CD4-positive, alpha-beta T cell (primary cell): ENCODE measurements at regions of chr7 and their contacts with region 1.

Region 1: GRCh38 chr7:154927624-154928143 is 75.2 kb downstream of the PAXIP1 start:
- DNase-seq: peak; percentile 59 to 91 (median 74)
- ATAC-seq: peak; percentile 59
- H3K4me3 ChIP-seq: peak overlapping the region; percentile 80
- H3K4me3 Mint-ChIP-seq: peak overlapping the region; percentile 93
- H3K27ac ChIP-seq: peak overlapping the region; percentile 69 to 82
- H3K27ac Mint-ChIP-seq: peak overlapping the region; percentile 96
- H3K4me1 ChIP-seq: peaks cover 25% of the 10 kb centered on the region
- H3K4me1 Mint-ChIP-seq: peaks cover 40% of the 10 kb centered on the region
- H3K27me3 ChIP-seq: no peaks in the 10 kb centered on the region
- H3K27me3 Mint-ChIP-seq: no peaks in the 10 kb centered on the region
- CTCF ChIP-seq: peak; percentile 72

Region 2: GRCh38 chr7:154913638-154914312 is 13.9 kb before region 1 on chr7:
- CTCF ChIA-PET with region 1: interaction called, 26 read pairs
- POLR2A ChIA-PET with region 1: interaction called, 15 read pairs
- intact Hi-C with region 1: no loop called
- DNase-seq: peak; percentile 81 to 93 (median 86)
- ATAC-seq: peak; percentile 98
- H3K4me3 ChIP-seq: peak overlapping the region; percentile 49
- H3K4me3 Mint-ChIP-seq: peak overlapping the region; percentile 84
- H3K27ac ChIP-seq: no peak overlapping the region
- H3K27ac Mint-ChIP-seq: no peak overlapping the region
- H3K4me1 ChIP-seq: peaks cover 10% of the 10 kb centered on the region
- H3K4me1 Mint-ChIP-seq: peaks cover 5% of the 10 kb centered on the region
- H3K27me3 ChIP-seq: peaks cover 0 to 10% of the 10 kb centered on the region in 2 experiments
- H3K27me3 Mint-ChIP-seq: peaks cover 26% of the 10 kb centered on the region
- CTCF ChIP-seq: peak; percentile 94

Region 3: DNA sequence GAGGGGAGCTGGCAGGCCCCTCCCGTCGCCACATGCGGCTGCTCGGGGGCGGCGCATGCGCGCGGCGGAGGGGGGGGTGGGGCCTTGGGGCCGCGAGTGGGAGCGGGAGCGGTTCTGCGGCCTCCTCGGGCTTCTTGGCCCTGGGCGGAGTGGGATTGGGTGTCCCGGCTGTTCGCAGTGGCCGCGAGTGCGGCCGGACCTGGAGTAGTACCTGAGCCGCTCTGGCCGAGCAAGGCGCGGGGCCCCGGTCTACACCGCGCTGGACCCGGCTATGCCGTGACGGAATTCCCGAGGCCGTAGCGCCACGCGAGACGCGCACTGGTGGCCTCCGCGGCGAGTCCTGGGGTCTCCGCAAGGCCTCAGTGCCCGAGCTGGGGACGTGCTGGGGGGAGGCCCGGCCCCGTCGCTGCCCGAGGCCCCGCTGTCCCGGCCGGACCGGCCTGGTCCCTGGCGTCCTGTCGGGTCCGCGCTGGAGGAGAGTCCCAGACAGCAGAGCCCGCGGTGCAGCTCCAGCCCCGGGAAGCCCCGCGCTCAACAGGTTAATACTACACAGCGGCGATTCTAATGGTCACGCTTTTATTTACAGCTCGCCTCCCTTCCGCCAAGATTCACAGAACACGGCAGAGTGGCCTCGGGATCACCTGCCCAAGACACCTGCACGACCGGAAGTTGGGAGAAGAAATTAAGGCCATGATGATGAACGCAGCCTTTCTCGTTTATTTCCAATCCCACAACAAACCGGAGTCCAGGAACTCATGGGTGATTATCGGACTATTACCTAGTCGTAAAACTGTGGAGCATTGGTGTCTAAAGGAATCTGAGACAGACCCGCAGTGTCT is 75.9 kb after region 1 on chr7:
- CTCF ChIA-PET with region 1: interaction called, 8 read pairs
- POLR2A ChIA-PET with region 1: interaction called, 29 read pairs
- intact Hi-C with region 1: loop called (anchors 1 kb)
- DNase-seq: peak; percentile 71 to 92 (median 85)
- ATAC-seq: peak; percentile 86
- H3K4me3 ChIP-seq: peak overlapping the region; percentile 85
- H3K4me3 Mint-ChIP-seq: peak overlapping the region; percentile 97
- H3K27ac ChIP-seq: peak overlapping the region; percentile 40 to 52
- H3K27ac Mint-ChIP-seq: peak overlapping the region; percentile 88
- H3K4me1 ChIP-seq: peaks cover 16% of the 10 kb centered on the region
- H3K4me1 Mint-ChIP-seq: peaks cover 23% of the 10 kb centered on the region
- H3K27me3 ChIP-seq: no peaks in the 10 kb centered on the region
- H3K27me3 Mint-ChIP-seq: no peaks in the 10 kb centered on the region
- CTCF ChIP-seq: no peak

Region 4: DNA sequence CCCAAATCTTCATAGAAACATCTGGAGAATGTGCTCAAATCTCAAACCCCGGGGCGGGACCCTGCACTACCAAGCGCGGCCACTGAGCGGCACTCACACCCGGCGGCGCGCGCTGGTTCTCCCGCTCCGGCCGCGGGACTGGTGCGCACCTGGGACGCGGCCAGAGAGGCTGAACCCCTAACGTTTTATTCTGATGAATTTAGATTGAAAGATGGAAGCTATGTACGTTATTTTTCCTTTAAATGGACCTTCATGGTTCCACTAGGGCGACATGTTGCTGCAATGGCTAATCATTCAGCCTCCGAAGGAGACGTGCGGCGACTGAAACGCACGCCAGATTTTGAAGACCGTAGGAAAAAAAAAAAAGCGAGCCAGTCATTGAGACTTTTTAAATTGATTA is 263.0 kb after region 1 on chr7:
- CTCF ChIA-PET with region 1: no interaction called
- POLR2A ChIA-PET with region 1: interaction called, 3 read pairs
- intact Hi-C with region 1: loop called in 1 of 2 experiments (anchors 5 kb)
- DNase-seq: peak in 13 of 14 experiments; percentile 37 to 75 (median 58)
- ATAC-seq: peak; percentile 73
- H3K4me3 ChIP-seq: no peak overlapping the region
- H3K4me3 Mint-ChIP-seq: no peak overlapping the region
- H3K27ac ChIP-seq: no peak overlapping the region
- H3K27ac Mint-ChIP-seq: no peak overlapping the region
- H3K4me1 ChIP-seq: peaks cover 5% of the 10 kb centered on the region
- H3K4me1 Mint-ChIP-seq: no peaks in the 10 kb centered on the region
- H3K27me3 ChIP-seq: no peaks in the 10 kb centered on the region
- H3K27me3 Mint-ChIP-seq: peaks cover 26% of the 10 kb centered on the region
- CTCF ChIP-seq: peak; percentile 86

Region 5: GRCh38 chr7:155298834-155299534 is 371.3 kb after region 1 on chr7:
- CTCF ChIA-PET with region 1: interaction called, 4 read pairs
- POLR2A ChIA-PET with region 1: interaction called, 56 read pairs
- intact Hi-C with region 1: loop called (anchors 1 to 2 kb)
- DNase-seq: peak; percentile 89 to 99 (median 94)
- ATAC-seq: peak; percentile 74
- H3K4me3 ChIP-seq: peak overlapping the region; percentile 59
- H3K4me3 Mint-ChIP-seq: peak overlapping the region; percentile 94
- H3K27ac ChIP-seq: peak overlapping the region; percentile 84 to 91
- H3K27ac Mint-ChIP-seq: peak overlapping the region; percentile 89
- H3K4me1 ChIP-seq: peaks cover 39% of the 10 kb centered on the region
- H3K4me1 Mint-ChIP-seq: peaks cover 41% of the 10 kb centered on the region
- H3K27me3 ChIP-seq: no peaks in the 10 kb centered on the region
- H3K27me3 Mint-ChIP-seq: no peaks in the 10 kb centered on the region
- CTCF ChIP-seq: no peak

Region 6: GRCh38 chr7:155644178-155644970 is 716.7 kb after region 1 on chr7 and contains the start of gene RBM33:
- CTCF ChIA-PET with region 1: no interaction called
- POLR2A ChIA-PET with region 1: interaction called, 7 read pairs
- intact Hi-C with region 1: loop called in 1 of 2 experiments (anchors 5 kb)
- DNase-seq: peak; percentile 53 to 87 (median 69)
- ATAC-seq: peak; percentile 81
- H3K4me3 ChIP-seq: peak within 1 kb of the TSS; percentile 79
- H3K4me3 Mint-ChIP-seq: peak within 1 kb of the TSS; percentile 99
- H3K27ac ChIP-seq: peak within 1 kb of the TSS; percentile 83 to 94
- H3K27ac Mint-ChIP-seq: peak within 1 kb of the TSS; percentile 94
- H3K4me1 ChIP-seq: peaks cover 22% of the 10 kb centered on the region
- H3K4me1 Mint-ChIP-seq: peaks cover 62% of the 10 kb centered on the region
- H3K27me3 ChIP-seq: no peaks in the 10 kb centered on the region
- H3K27me3 Mint-ChIP-seq: no peaks in the 10 kb centered on the region
- CTCF ChIP-seq: no peak
- total RNA-seq, gene RBM33: 178 to 184 TPM

Region 7: DNA sequence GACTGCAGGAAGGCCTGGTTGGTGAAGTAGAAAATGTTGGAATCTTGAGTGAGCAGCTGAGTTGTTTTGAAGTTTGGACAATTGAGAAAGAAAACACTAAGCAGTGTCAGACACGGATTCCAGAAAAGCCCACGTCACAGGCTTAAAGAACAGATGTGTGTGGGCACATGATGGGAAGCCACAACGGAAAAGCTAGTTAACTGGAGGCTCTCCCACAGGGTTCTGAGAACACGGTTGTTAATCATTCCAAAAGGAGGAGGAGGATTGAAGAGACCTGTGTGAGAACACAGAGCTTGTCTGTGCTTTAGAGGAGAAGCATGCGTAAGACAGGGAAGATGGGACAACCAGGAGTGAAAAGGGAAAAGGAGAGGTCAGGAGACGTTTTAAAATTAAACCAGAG is 842.0 kb after region 1 on chr7:
- CTCF ChIA-PET with region 1: interaction called, 5 read pairs
- POLR2A ChIA-PET with region 1: no interaction called
- intact Hi-C with region 1: loop called (anchors 5 kb)
- DNase-seq: no peak
- ATAC-seq: no peak
- H3K4me3 ChIP-seq: no peak overlapping the region
- H3K4me3 Mint-ChIP-seq: no peak overlapping the region
- H3K27ac ChIP-seq: no peak overlapping the region
- H3K27ac Mint-ChIP-seq: no peak overlapping the region
- H3K4me1 ChIP-seq: peaks cover 4% of the 10 kb centered on the region
- H3K4me1 Mint-ChIP-seq: peaks cover 8% of the 10 kb centered on the region
- H3K27me3 ChIP-seq: no peaks in the 10 kb centered on the region
- H3K27me3 Mint-ChIP-seq: no peaks in the 10 kb centered on the region
- CTCF ChIP-seq: no peak